Naive thymus-derived CD4-positive, alpha-beta T cell (primary cell): ENCODE measurements at regions of chr12 and their contacts with region 1.

Region 1: GRCh38 chr12:121668750-121669520 is 519 bp downstream of the MORN3 start:
- DNase-seq: peak in 7 of 9 donors; percentile 32 to 66 (median 56)
- ATAC-seq: no peak
- H3K4me3 ChIP-seq: no peak overlapping the region
- H3K4me3 Mint-ChIP-seq: peak overlapping the region in 9 of 10 donors; percentile 34 to 62 (median 54)
- H3K27ac ChIP-seq: peak overlapping the region; percentile 36
- H3K27ac Mint-ChIP-seq: peak overlapping the region; percentile 49 to 93 (median 75)
- H3K4me1 ChIP-seq: peaks cover 16 to 53% of the 10 kb centered on the region in 2 donors
- H3K4me1 Mint-ChIP-seq: peaks cover 44 to 71% (median 57%) of the 10 kb centered on the region in 7 donors
- H3K27me3 ChIP-seq: no peaks in the 10 kb centered on the region
- H3K27me3 Mint-ChIP-seq: no peaks in the 10 kb centered on the region

Region 2: GRCh38 chr12:121399391-121400331 is 269.3 kb before region 1 on chr12 and contains the start of gene RNF34:
- CTCF ChIA-PET with region 1: no interaction called
- POLR2A ChIA-PET with region 1: interaction called, 3 read pairs
- intact Hi-C with region 1: loop called in 1 of 2 experiments (anchors 5 kb)
- DNase-seq: peak; percentile 88 to 98 (median 97)
- ATAC-seq: peak; percentile 96
- H3K4me3 ChIP-seq: peak within 1 kb of the TSS; percentile 93
- H3K4me3 Mint-ChIP-seq: peak within 1 kb of the TSS; percentile 89 to 99 (median 94)
- H3K27ac ChIP-seq: peak within 1 kb of the TSS; percentile 91
- H3K27ac Mint-ChIP-seq: peak within 1 kb of the TSS; percentile 91 to 97 (median 94)
- H3K4me1 ChIP-seq: peaks cover 20 to 26% of the 10 kb centered on the region in 2 donors
- H3K4me1 Mint-ChIP-seq: peaks cover 29 to 52% (median 39%) of the 10 kb centered on the region in 7 donors
- H3K27me3 ChIP-seq: no peaks in the 10 kb centered on the region
- H3K27me3 Mint-ChIP-seq: no peaks in the 10 kb centered on the region
- total RNA-seq, gene RNF34: 61.1 to 98.4 (median 81.7) TPM

Region 3: DNA sequence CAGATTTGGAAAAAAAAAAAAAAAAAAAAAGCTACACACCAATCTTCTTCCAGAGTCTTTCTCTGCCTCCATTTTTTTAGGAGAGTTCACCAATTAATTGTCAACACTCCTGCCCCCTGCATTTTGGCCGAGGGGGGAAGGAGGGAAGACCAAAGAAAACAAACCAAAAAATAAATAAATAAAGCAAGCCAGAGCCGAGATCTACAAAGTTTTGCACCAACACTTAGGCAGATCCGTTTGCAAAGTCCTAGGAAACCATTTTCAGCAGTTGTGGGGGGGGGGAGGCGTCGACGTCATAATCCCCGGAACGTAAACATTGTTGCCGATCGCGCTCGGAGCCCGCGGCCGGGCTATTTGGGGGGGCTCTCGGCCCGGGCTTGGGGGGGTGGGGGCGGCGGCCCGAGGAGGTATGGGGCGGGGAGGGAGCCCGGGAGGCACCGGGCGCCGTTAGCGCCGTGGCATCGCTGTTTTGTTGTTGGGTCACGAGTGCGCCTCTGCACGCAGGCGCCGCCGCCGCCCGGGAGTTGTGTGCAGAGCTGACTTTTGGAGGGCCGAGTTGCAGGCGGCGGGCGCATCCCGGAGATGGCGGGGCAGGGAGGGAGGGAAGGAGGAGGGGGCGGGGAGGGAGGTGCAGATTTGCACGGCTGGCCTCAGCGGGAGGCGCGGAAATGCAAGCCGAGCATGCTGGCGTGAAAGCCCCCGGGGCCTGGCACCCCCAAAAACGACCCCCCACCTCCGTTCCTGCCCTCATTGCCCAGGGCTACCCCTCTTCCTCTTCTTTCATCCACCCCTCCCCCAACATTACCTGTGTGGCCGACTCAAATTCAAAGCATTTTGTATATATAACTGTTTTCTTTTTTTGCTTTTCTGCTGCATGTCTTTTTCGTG is 88.7 kb before region 1 on chr12:
- CTCF ChIA-PET with region 1: interaction called, 7 read pairs
- POLR2A ChIA-PET with region 1: interaction called, 14 read pairs
- intact Hi-C with region 1: loop called in 1 of 2 experiments (anchors 1 kb)
- DNase-seq: peak; percentile 61 to 79 (median 74)
- ATAC-seq: peak; percentile 76
- H3K4me3 ChIP-seq: peak overlapping the region; percentile 75
- H3K4me3 Mint-ChIP-seq: peak overlapping the region; percentile 92 to 100 (median 98)
- H3K27ac ChIP-seq: peak overlapping the region; percentile 91
- H3K27ac Mint-ChIP-seq: peak overlapping the region; percentile 92 to 99 (median 99)
- H3K4me1 ChIP-seq: peaks cover 25 to 28% of the 10 kb centered on the region in 2 donors
- H3K4me1 Mint-ChIP-seq: peaks cover 24 to 58% (median 49%) of the 10 kb centered on the region in 7 donors
- H3K27me3 ChIP-seq: no peaks in the 10 kb centered on the region
- H3K27me3 Mint-ChIP-seq: no peaks in the 10 kb centered on the region

Region 4: DNA sequence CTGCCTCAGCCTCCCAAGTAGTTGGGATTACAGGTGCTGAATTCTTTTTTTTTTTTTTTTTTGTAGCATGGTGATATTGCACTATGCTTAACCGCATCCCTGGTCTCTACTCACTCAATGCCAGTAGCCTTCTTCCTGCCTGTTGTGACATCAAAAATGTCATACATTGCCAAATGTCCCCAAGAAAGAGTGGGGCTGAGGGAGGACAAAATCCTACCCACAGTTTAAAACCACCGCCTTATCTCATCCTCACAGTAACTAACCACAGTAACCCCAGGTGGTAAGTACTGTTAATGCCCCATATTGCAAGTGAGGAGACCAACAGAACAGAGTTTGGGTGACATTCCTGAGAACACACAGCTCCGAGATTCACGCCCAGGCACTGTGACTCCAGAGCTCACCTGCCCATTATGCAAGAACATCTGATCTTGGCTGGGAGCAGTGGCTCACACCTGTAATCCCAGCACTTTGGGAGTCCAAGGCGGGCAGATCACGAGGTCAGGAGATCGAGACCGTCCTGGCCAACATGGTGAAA is 19.0 kb before region 1 on chr12:
- CTCF ChIA-PET with region 1: interaction called, 17 read pairs
- POLR2A ChIA-PET with region 1: interaction called, 11 read pairs
- intact Hi-C with region 1: no loop called
- DNase-seq: peak in 1 of 9 donors; percentile 23
- ATAC-seq: peak; percentile 88
- H3K4me3 ChIP-seq: no peak overlapping the region
- H3K4me3 Mint-ChIP-seq: peak overlapping the region; percentile 22 to 70 (median 58)
- H3K27ac ChIP-seq: no peak overlapping the region
- H3K27ac Mint-ChIP-seq: peak overlapping the region; percentile 16 to 92 (median 80)
- H3K4me1 ChIP-seq: peaks cover 14 to 16% of the 10 kb centered on the region in 2 donors
- H3K4me1 Mint-ChIP-seq: peaks cover 14 to 41% (median 36%) of the 10 kb centered on the region in 7 donors
- H3K27me3 ChIP-seq: no peaks in the 10 kb centered on the region
- H3K27me3 Mint-ChIP-seq: no peaks in the 10 kb centered on the region

Region 5: DNA sequence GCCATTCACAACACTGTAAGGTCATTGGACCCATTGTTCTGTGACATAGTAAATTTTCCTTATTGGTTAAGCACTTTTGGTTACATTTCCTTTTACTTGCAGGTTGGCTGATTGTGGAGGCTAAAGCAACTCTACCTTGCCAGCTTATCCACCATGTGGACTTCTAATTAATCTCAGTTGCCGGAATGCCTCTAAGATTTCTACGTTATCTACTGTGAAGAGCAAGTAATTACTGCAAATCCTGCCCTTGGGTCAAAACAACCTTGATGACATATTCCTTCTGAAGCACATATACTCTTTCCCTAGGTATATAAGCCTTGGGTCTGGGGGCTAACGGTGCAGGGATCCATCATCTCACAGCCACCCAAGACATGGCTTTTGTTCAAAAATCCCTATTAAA is 20.0 kb after region 1 on chr12:
- CTCF ChIA-PET with region 1: interaction called, 8 read pairs
- POLR2A ChIA-PET with region 1: interaction called, 19 read pairs
- intact Hi-C with region 1: loop called (anchors 1 to 2 kb)
- DNase-seq: no peak
- ATAC-seq: no peak
- H3K4me3 ChIP-seq: no peak overlapping the region
- H3K4me3 Mint-ChIP-seq: no peak overlapping the region
- H3K27ac ChIP-seq: no peak overlapping the region
- H3K27ac Mint-ChIP-seq: peak overlapping the region in 6 of 9 donors; percentile 8 to 36 (median 22)
- H3K4me1 ChIP-seq: peaks cover 0 to 4% of the 10 kb centered on the region in 2 donors
- H3K4me1 Mint-ChIP-seq: peaks cover 0 to 16% (median 10%) of the 10 kb centered on the region in 7 donors
- H3K27me3 ChIP-seq: no peaks in the 10 kb centered on the region
- H3K27me3 Mint-ChIP-seq: peaks cover 0 to 6% (median 0%) of the 10 kb centered on the region in 5 donors

Region 6: GRCh38 chr12:121802846-121803630 is 134.1 kb after region 1 on chr12:
- CTCF ChIA-PET with region 1: no interaction called
- POLR2A ChIA-PET with region 1: interaction called, 17 read pairs
- intact Hi-C with region 1: no loop called
- DNase-seq: peak; percentile 84 to 94 (median 92)
- ATAC-seq: peak; percentile 65
- H3K4me3 ChIP-seq: peak overlapping the region; percentile 94
- H3K4me3 Mint-ChIP-seq: peak overlapping the region; percentile 89 to 99 (median 96)
- H3K27ac ChIP-seq: peak overlapping the region; percentile 96
- H3K27ac Mint-ChIP-seq: peak overlapping the region; percentile 98 to 100 (median 99)
- H3K4me1 ChIP-seq: peaks cover 21 to 28% of the 10 kb centered on the region in 2 donors
- H3K4me1 Mint-ChIP-seq: peaks cover 25 to 37% (median 29%) of the 10 kb centered on the region in 7 donors
- H3K27me3 ChIP-seq: no peaks in the 10 kb centered on the region
- H3K27me3 Mint-ChIP-seq: no peaks in the 10 kb centered on the region